ENCODE measurements at regions of chr22 and their contacts with region 1.

Region 1: GRCh38 chr22:38051900-38052862 is 5.0 kb upstream of the PICK1 start:
- H3K4me3 ChIP-seq: no peak overlapping the region
- H3K27ac ChIP-seq: no peak overlapping the region
- H3K4me1 ChIP-seq: no peaks in the 10 kb centered on the region
- CTCF ChIP-seq: peak; percentile 97

Region 2: GRCh38 chr22:38040953-38041759 is 11.0 kb before region 1 on chr22:
- CTCF ChIA-PET with region 1: interaction called, 22 read pairs
- POLR2A ChIA-PET with region 1: interaction called, 8 read pairs
- H3K4me3 ChIP-seq: no peak overlapping the region
- H3K27ac ChIP-seq: no peak overlapping the region
- H3K4me1 ChIP-seq: no peaks in the 10 kb centered on the region
- CTCF ChIP-seq: no peak

Region 3: DNA sequence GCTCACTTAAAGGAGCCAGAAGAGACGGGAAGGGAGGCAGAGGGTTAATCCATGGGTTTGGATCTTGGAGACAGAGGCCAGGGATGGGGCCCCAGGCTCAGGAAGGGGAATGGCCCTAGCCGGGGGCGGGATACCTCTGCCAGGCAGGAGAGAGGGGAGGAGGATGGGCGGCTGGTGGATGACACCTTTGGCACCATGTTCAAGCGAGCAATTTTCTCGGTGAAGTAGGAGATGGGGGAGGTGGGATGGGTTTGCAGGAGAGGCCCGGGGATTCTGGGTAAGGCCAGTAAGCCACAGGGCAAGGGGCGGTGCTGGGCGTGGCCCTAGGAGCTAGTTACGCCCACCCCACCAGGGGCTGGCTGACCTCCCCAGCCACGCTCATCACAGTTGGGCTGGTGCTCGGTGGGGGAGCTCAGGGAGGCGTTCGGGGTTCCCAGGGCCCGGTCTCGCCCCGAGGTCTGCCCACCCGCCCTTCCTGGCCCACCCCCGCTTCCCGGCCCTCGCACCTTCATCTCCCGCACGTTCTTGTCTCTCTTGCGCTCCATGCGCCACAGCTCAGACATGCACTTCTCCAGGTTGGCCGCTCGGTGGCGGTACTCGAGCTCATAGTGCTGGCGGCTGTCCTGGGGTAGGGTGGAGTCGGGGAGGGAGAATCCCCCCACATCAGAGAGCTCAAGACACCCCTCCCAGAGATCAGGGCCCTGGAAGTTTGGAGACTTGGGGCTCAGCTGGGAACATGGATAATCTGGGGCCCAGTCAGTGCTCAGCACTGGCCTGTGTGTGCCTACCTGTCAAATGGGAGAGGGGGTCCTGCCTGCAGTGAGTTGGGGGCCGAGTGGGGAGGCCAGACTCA is 45.6 kb after region 1 on chr22:
- CTCF ChIA-PET with region 1: interaction called, 46 read pairs
- POLR2A ChIA-PET with region 1: no interaction called
- H3K4me3 ChIP-seq: no peak overlapping the region
- H3K27ac ChIP-seq: no peak overlapping the region
- H3K4me1 ChIP-seq: no peaks in the 10 kb centered on the region; the same call in 1 of the 2 replicates
- CTCF ChIP-seq: no peak

Region 4: GRCh38 chr22:38193580-38193979 is 141.4 kb after region 1 on chr22:
- CTCF ChIA-PET with region 1: no interaction called
- POLR2A ChIA-PET with region 1: no interaction called
- H3K4me3 ChIP-seq: no peak overlapping the region
- H3K27ac ChIP-seq: no peak overlapping the region
- H3K4me1 ChIP-seq: no peaks in the 10 kb centered on the region
- CTCF ChIP-seq: no peak

Region 5: DNA sequence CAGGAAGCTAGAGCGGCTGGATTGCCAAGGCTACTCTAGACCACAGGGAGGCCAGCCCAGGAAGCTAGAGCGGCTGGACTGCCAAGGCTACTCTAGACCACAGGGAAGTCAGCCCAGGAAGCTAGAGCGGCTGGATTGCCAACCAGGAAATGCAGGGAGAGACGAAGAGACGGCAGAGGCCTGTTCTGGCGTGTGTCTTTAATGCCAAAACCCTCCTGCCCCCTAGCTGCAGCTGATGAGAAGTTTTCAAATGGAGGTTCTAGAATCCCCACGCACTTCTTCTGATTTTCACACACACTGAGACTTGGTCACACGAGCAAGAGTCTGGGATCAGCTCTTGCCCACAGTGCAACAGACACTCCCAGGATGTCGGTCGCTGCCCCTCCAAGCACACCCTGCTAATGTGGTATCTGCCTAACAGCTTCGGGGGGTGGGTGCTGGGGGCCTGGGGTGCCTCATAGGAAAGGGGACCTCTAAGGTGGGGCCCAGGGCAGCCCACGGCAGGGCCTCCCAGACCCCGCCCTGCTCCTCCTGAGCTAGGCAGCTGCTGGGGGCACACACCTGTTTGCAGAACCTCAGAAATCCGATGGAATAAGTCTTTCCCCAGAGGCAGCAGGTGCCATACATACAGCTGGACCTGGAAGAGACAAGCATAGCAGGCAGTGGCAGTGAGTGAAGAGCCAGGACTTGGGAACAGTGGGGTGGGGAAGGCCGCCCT is 178.1 kb after region 1 on chr22:
- CTCF ChIA-PET with region 1: interaction called, 21 read pairs
- POLR2A ChIA-PET with region 1: interaction called, 3 read pairs
- H3K4me3 ChIP-seq: no peak overlapping the region
- H3K27ac ChIP-seq: no peak overlapping the region
- H3K4me1 ChIP-seq: no peaks in the 10 kb centered on the region
- CTCF ChIP-seq: no peak

Region 6: GRCh38 chr22:38569972-38570778 is 518.0 kb after region 1 on chr22 and contains the start of gene DMC1:
- CTCF ChIA-PET with region 1: interaction called, 74 read pairs
- POLR2A ChIA-PET with region 1: interaction called, 9 read pairs
- H3K4me3 ChIP-seq: peak within 1 kb of the TSS; percentile 62
- H3K27ac ChIP-seq: peak within 1 kb of the TSS; percentile 61
- H3K4me1 ChIP-seq: peaks cover 20% of the 10 kb centered on the region
- CTCF ChIP-seq: no peak